B cell (primary cell): ENCODE measurements at regions of chr6 and their contacts with region 1.

Region 1: DNA sequence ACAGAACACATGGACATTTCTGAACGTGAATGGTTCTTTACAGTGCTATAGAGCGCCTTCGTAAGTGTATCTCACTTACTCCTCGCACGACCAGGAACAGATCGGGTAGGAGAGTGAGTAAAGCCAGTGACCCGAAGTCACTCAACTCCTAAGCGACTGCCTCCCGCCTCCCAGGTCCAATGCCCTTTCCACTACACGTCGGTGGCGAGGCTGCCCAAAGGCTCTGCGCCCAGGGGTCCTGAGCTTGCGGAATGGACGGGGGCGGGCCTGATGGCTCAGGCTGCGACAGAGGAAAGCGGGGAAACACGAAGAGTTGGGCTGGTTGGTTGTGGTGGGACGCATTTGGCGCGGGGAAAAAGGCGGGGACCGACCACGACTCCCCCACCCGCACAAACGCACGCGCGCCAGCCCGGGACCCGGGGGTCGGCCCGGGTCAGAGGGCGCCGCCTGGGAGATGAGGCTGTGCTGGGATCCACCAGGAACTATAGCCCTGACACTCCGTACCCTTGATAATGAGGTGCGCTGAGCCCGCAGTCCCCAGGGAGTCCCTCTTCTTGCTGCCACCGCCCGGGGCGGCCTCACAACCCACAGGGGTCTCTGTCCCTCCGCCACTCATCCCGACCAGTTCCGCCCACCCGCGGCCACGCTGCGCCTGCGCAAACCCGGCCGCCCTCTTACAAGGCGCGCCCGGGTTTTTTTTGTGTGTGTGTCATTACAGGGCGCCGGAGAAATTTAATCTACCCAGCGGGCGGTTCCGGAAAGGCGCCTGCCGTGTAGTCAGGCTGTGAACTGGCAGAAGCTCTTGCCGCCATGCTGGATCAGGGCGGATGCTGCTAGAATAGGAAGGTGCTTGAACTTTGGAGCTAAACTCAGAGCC is at the start of gene BLOC1S5:
- DNase-seq: peak; percentile 97
- ATAC-seq: peak; percentile 90
- H3K4me3 ChIP-seq: peak within 1 kb of the TSS; percentile 78 to 96 (median 85)
- H3K4me3 Mint-ChIP-seq: peak within 1 kb of the TSS; percentile 98
- H3K27ac ChIP-seq: peak within 1 kb of the TSS; percentile 85 to 86
- H3K27ac Mint-ChIP-seq: peak within 1 kb of the TSS; percentile 94
- H3K4me1 ChIP-seq: peaks cover 7 to 15% of the 10 kb centered on the region in 2 donors
- H3K4me1 Mint-ChIP-seq: peaks cover 20% of the 10 kb centered on the region
- H3K27me3 ChIP-seq: no peaks in the 10 kb centered on the region
- H3K27me3 Mint-ChIP-seq: no peaks in the 10 kb centered on the region
- CTCF ChIP-seq: no peak
- total RNA-seq, gene BLOC1S5: 16.0 and 18.8 TPM in 2 replicates

Region 2: DNA sequence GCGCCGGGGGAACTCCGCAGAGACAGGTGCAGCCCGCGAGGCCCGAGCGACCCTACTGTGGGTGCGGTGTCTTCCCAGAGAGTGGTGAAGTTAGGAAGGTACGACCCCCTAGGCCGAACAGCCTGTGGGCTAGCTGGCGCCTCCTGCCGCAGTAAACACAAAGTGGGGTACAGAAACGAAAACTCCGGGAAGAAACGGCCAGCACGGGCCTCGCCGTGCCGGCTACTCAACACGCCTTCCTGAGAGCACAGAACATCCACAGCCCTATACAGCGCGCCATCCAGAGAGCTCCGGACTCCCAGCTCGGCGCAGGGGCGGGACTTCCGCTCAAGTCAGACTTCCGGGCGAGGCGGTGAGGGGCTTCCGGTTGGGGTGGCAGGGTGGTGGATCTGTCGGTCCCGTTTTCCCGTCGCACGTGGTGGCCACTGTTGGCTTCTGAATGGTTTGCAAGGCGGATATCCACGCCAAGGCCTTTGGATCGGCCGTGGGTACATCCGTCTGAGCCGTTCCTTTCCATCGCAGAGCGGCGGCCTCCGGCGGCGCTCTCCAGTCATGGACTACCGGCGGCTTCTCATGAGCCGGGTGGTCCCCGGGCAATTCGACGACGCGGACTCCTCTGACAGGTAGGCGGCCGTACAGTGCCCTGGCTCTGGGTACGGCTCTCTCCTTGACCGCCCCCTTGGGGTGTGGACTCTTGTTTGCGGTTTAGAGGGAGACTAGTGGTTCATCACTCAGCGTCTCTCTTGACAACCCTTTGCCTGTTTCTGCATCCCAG is 674.4 kb before region 1 on chr6 and contains the starts of genes CAGE1 and RIOK1:
- CTCF ChIA-PET with region 1: no interaction called
- POLR2A ChIA-PET with region 1: no interaction called
- intact Hi-C with region 1: loop called (anchors 2 kb)
- DNase-seq: peak; percentile 98
- ATAC-seq: peak; percentile 89
- H3K4me3 ChIP-seq: peak within 1 kb of the TSS; percentile 83 to 96 (median 85)
- H3K4me3 Mint-ChIP-seq: peak within 1 kb of the TSS; percentile 96
- H3K27ac ChIP-seq: peak within 1 kb of the TSS; percentile 96 to 100
- H3K27ac Mint-ChIP-seq: peak within 1 kb of the TSS; percentile 99
- H3K4me1 ChIP-seq: peaks cover 18 to 26% of the 10 kb centered on the region in 2 donors
- H3K4me1 Mint-ChIP-seq: peaks cover 34% of the 10 kb centered on the region
- H3K27me3 ChIP-seq: no peaks in the 10 kb centered on the region
- H3K27me3 Mint-ChIP-seq: no peaks in the 10 kb centered on the region
- CTCF ChIP-seq: no peak
- total RNA-seq, gene CAGE1: 0.32 and 0.34 TPM in 2 replicates
- total RNA-seq, gene RIOK1: 25.9 and 32.1 TPM in 2 replicates

Region 3: GRCh38 chr6:7725849-7726415 is 338.1 kb before region 1 on chr6 and contains the start of gene BMP6:
- CTCF ChIA-PET with region 1: interaction called, 63 read pairs
- POLR2A ChIA-PET with region 1: no interaction called
- intact Hi-C with region 1: loop called (anchors 1 kb)
- DNase-seq: peak; percentile 86
- ATAC-seq: peak; percentile 82
- H3K4me3 ChIP-seq: peak within 1 kb of the TSS; percentile 35 to 63 (median 51)
- H3K4me3 Mint-ChIP-seq: peak within 1 kb of the TSS; percentile 89
- H3K27ac ChIP-seq: no peak within 1 kb of the TSS
- H3K27ac Mint-ChIP-seq: no peak within 1 kb of the TSS
- H3K4me1 ChIP-seq: peaks cover 31 to 38% of the 10 kb centered on the region in 2 donors
- H3K4me1 Mint-ChIP-seq: peaks cover 30% of the 10 kb centered on the region
- H3K27me3 ChIP-seq: peaks cover 0 to 66% (median 45%) of the 10 kb centered on the region in 4 experiments
- H3K27me3 Mint-ChIP-seq: peaks cover 69% of the 10 kb centered on the region
- CTCF ChIP-seq: no peak
- total RNA-seq, gene BMP6: 2.2 and 2.9 TPM in 2 replicates

Region 4: DNA sequence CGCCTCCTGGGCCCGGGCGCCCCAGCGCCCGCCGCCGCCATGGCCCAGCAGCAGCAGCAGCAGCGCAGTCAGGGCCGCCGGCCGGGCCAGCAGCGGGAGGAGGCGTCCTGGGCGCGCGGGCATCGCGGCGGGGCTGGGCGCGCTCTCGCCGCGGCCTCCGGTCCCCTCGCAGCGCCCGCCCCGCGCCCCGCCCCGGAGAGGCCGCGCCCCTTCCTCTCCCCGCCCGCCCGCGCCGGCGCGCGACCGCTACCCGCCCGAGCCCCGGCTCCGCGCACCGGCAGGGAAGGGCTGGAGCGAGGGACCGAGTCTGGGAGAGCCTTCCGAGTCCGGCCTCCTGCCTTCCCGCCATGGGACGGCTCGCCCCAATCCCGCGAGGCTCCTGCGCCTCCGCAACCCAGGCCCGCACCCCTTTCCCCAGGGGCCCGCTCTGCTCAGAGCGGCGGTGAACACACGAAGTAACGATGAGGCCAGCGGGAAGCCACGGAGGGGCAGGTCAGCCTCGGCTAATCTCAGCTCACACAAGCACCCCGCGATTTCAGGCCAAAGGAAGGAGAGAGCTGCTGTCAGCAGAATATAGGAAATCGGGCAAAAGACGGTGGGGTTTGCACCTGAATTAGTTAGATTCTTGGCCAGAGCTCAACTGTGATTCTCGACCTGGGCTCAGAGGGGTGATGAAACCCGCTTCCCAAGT is 153.2 kb before region 1 on chr6 and contains the start of gene TXNDC5:
- CTCF ChIA-PET with region 1: interaction called, 3 read pairs
- POLR2A ChIA-PET with region 1: interaction called, 12 read pairs
- intact Hi-C with region 1: loop called (anchors 1 kb)
- DNase-seq: peak; percentile 81
- ATAC-seq: peak; percentile 85
- H3K4me3 ChIP-seq: peak within 1 kb of the TSS; percentile 30 to 82 (median 61)
- H3K4me3 Mint-ChIP-seq: peak within 1 kb of the TSS; percentile 82
- H3K27ac ChIP-seq: peak within 1 kb of the TSS; percentile 74 to 90
- H3K27ac Mint-ChIP-seq: peak within 1 kb of the TSS; percentile 77
- H3K4me1 ChIP-seq: peaks cover 27 to 71% of the 10 kb centered on the region in 2 donors
- H3K4me1 Mint-ChIP-seq: peaks cover 22% of the 10 kb centered on the region
- H3K27me3 ChIP-seq: no peaks in the 10 kb centered on the region
- H3K27me3 Mint-ChIP-seq: no peaks in the 10 kb centered on the region
- CTCF ChIP-seq: no peak
- total RNA-seq, gene TXNDC5: 57.5 and 62.6 TPM in 2 replicates

Region 5: DNA sequence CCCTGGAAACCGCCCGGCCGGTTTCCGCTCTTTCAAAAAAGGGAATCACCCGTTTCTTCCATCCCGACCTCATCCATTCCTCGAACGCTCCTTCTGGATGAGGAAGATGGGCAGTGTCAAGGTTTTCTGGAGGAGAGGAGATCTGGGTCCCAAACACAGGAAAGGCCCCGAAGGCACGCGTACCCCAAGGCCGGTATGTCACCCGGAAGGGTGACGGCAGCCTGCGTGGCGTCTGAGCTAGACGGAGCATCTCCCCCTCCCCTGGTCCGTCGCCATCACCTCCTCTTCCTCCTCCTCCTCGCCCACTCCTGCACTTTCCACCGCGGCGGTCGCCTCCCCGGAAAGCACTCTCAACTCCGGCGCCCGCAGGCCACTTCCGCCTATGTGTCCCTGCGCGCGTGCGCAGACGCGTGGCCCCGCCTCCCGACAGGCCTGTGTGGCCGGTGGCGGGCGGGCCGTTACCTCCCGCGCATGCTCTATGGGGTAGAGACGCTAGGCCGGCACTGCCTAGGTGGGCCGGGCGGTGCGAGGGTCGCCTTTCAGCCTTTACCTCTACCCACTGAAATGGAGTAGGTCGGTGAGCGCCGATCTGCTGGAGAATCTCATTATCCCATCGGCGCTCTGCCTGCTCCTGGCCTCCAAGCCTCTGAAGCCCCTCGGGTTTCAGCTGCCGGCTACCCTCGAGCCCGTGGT is 371.3 kb after region 1 on chr6 and contains the start of gene SLC35B3:
- CTCF ChIA-PET with region 1: no interaction called
- POLR2A ChIA-PET with region 1: no interaction called
- intact Hi-C with region 1: loop called (anchors 1 kb)
- DNase-seq: peak; percentile 97
- ATAC-seq: peak; percentile 90
- H3K4me3 ChIP-seq: peak within 1 kb of the TSS; percentile 75 to 100 (median 96)
- H3K4me3 Mint-ChIP-seq: peak within 1 kb of the TSS; percentile 96
- H3K27ac ChIP-seq: peak within 1 kb of the TSS; percentile 68 to 88
- H3K27ac Mint-ChIP-seq: peak within 1 kb of the TSS; percentile 98
- H3K4me1 ChIP-seq: peaks cover 12 to 19% of the 10 kb centered on the region in 2 donors
- H3K4me1 Mint-ChIP-seq: peaks cover 41% of the 10 kb centered on the region
- H3K27me3 ChIP-seq: no peaks in the 10 kb centered on the region
- H3K27me3 Mint-ChIP-seq: no peaks in the 10 kb centered on the region
- CTCF ChIP-seq: no peak
- total RNA-seq, gene SLC35B3: 14.6 and 17.1 TPM in 2 replicates